Left cardiac atrium (tissue), 4 donors: ENCODE measurements at regions of chr14 and their contacts with region 1.

Region 1: DNA sequence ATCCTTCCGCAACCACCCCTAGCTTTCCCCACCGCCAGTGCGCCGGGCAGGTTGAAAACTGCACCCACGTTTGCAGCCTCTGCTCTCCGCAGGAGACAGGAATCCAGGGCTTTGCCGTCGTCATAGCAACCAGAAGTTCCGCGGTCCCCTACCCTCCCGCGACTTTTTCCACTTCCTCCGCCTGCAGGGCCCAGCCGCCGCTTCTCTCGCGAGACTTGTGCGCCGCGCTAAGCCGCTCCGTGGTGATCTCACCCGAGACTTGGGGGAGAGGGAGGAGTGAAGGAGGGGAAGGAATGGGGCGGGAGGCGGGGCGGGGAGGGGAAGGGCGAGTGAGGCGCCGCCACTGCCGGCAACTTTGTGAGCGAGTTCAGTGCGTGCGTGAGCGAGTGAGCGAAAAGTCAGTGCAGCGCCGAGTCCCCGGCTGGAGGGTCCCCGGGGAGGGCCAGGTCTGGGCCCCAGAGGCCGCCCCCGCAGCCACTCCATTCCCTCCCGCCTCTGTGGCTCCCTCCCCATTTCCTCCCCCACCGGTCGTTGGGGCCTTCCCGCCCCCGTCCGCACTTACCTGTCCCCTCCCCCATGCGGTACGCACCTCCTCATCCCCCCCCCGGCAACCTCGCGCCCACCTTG is 413.0 kb downstream of the PCNX1 start:
- DNase-seq: peak; percentile 98
- ATAC-seq: peak; percentile 96 to 97

Region 2: GRCh38 chr14:71138448-71139293 is 181.5 kb before region 1 on chr14:
- intact Hi-C with region 1: loop called in 1 of 2 experiments (anchors 10 kb)
- DNase-seq: peak; percentile 51
- ATAC-seq: peak; percentile 80 to 83

Region 3: GRCh38 chr14:71597955-71598660 is 277.9 kb after region 1 on chr14:
- intact Hi-C with region 1: no loop called
- DNase-seq: no peak
- ATAC-seq: no peak

Region 4: GRCh38 chr14:71753126-71753830 is 433.1 kb after region 1 on chr14:
- intact Hi-C with region 1: loop called in 1 of 2 experiments (anchors 10 kb)
- DNase-seq: peak; percentile 95
- ATAC-seq: peak; percentile 91 to 92